ENCODE measurements at regions of chr19 and their contacts with region 1.

Region 1: GRCh38 chr19:34145741-34146202 is 26.5 kb upstream of the LSM14A start:
- DNase-seq: no peak
- H3K4me3 ChIP-seq: no peak overlapping the region
- H3K27ac ChIP-seq: no peak overlapping the region
- H3K27me3 ChIP-seq: peaks cover 4% of the 10 kb centered on the region
- CTCF ChIP-seq: peak; percentile 85

Region 2: GRCh38 chr19:33778089-33778791 is 367.5 kb before region 1 on chr19:
- CTCF ChIA-PET with region 1: interaction called, 17 read pairs
- POLR2A ChIA-PET with region 1: no interaction called
- DNase-seq: no peak
- H3K4me3 ChIP-seq: no peak overlapping the region
- H3K27ac ChIP-seq: peak overlapping the region; percentile 11
- H3K27me3 ChIP-seq: peaks cover 11% of the 10 kb centered on the region
- CTCF ChIP-seq: peak; percentile 100

Region 3: GRCh38 chr19:34041925-34042521 is 103.7 kb before region 1 on chr19:
- CTCF ChIA-PET with region 1: interaction called, 29 read pairs
- POLR2A ChIA-PET with region 1: no interaction called
- DNase-seq: no peak
- H3K4me3 ChIP-seq: no peak overlapping the region
- H3K27ac ChIP-seq: no peak overlapping the region
- H3K27me3 ChIP-seq: no peaks in the 10 kb centered on the region
- CTCF ChIP-seq: peak; percentile 91

Region 4: GRCh38 chr19:34120846-34121639 is 24.7 kb before region 1 on chr19:
- CTCF ChIA-PET with region 1: interaction called, 61 read pairs
- POLR2A ChIA-PET with region 1: no interaction called
- DNase-seq: peak; percentile 20
- H3K4me3 ChIP-seq: no peak overlapping the region
- H3K27ac ChIP-seq: no peak overlapping the region
- H3K27me3 ChIP-seq: peaks cover 9% of the 10 kb centered on the region
- CTCF ChIP-seq: peak; percentile 91

Region 5: DNA sequence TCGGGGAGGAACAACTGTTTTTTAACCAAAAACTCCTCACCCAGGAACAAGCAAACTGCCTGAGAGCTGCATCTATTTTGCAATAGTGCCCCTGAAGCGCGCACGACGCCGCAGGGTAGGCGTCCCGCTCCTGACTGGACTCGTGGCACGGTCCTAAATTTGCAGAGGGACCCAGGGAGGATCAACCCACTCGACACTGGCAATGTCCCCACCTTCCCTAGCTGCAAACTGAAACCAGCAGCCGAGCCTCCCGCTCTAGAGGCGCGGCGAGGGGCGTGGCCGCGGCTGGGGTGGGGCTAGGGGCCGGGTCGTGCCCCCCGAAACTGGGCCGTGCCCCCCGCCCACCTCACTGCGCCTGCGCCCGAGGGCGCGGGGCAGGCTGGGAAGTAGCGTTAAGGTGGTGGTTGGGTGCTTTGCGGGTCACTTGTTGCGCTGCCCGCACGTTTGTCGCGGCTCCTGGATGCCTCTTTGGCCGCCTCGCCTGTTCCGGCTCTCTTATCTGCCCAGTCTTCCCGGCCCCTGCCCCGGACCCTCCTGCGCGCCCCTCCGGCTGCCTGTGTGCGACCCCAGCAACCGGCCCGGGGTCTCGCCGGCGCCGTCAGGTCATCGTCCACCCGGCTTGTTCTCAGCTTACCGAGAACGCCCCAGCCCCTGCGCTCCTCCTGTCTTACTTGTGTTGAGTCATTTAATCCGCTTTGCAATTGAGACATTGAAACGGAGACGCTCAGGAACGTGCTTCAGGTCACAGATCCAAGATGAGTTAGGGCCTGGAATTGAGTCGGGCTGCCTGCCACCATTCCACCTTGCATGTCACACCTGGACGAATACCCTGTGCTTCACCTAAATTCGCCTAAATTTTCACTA is 11.3 kb before region 1 on chr19:
- CTCF ChIA-PET with region 1: interaction called, 13 read pairs
- POLR2A ChIA-PET with region 1: no interaction called
- DNase-seq: peak; percentile 16
- H3K4me3 ChIP-seq: peak overlapping the region; percentile 77
- H3K27ac ChIP-seq: peak overlapping the region; percentile 68
- H3K27me3 ChIP-seq: no peaks in the 10 kb centered on the region
- CTCF ChIP-seq: no peak

Region 6: GRCh38 chr19:34215666-34216038 is 69.9 kb after region 1 on chr19:
- CTCF ChIA-PET with region 1: no interaction called
- POLR2A ChIA-PET with region 1: no interaction called
- DNase-seq: no peak
- H3K4me3 ChIP-seq: no peak overlapping the region
- H3K27ac ChIP-seq: no peak overlapping the region
- H3K27me3 ChIP-seq: no peaks in the 10 kb centered on the region
- CTCF ChIP-seq: no peak

Measured in AG04450 (cell line).